Gastrocnemius medialis (tissue), 4 donors: ENCODE measurements at regions of chr9 and their contacts with region 1.

Region 1: DNA sequence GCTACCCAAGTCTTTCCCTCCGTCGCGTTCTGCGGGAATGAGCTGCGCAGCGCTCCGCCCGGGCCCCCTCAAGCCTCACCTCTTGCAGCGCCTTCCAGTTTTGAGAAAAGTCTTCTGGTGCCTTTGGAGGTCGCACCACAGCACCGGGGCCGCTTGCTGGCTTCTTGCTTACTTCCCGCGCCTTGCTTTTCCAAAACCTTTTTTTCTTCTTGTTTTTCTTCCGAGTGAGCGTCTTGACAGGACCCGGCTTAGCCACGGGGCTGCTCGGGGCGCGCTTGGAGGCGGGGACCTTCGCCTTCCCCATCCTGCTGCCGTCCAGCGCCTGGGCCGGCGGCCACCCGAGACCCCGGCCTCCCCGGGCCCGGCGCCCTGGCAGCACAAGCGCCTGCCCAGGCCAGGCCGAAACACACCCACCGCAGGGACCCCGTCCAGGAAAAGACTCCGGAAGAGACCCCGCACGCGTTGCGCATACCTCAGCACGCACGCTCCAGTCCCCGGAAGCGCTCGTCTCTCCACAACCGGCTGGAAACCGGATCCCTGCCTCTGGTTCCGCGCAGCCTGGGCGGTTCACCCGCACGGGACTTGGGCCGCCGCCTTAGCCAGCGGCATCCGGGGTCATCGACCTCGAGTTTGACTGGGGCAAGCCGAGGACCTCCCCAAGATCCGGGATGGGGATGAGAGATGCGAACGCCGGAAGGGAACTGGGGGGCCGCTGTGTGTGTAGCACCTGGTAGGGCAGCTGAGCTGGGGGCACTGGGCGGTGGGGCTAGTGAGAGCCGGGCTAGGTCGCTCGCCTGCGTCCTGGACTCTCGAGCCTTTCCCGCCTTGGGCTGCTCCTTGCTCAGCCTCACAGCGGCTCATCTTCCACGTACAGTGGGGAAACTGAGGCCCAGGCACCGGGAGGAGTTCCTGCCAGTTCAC is at the start of gene REXO4:
- DNase-seq: peak; percentile 58 to 74
- ATAC-seq: peak; percentile 94 to 95
- H3K4me3 ChIP-seq: peak within 1 kb of the TSS; percentile 79 to 82 (median 82)
- H3K27ac ChIP-seq: peak within 1 kb of the TSS; percentile 74 to 86 (median 84)
- H3K4me1 ChIP-seq: peaks cover 21 to 23% of the 10 kb centered on the region in 2 donors
- H3K27me3 ChIP-seq: no peaks in the 10 kb centered on the region
- CTCF ChIP-seq: peak in 1 of 5 experiments; percentile 7
- POLR2A ChIP-seq: peak; percentile 17 to 45
- total RNA-seq, gene REXO4: 26.1 to 42.5 (median 34.6) TPM

Region 2: DNA sequence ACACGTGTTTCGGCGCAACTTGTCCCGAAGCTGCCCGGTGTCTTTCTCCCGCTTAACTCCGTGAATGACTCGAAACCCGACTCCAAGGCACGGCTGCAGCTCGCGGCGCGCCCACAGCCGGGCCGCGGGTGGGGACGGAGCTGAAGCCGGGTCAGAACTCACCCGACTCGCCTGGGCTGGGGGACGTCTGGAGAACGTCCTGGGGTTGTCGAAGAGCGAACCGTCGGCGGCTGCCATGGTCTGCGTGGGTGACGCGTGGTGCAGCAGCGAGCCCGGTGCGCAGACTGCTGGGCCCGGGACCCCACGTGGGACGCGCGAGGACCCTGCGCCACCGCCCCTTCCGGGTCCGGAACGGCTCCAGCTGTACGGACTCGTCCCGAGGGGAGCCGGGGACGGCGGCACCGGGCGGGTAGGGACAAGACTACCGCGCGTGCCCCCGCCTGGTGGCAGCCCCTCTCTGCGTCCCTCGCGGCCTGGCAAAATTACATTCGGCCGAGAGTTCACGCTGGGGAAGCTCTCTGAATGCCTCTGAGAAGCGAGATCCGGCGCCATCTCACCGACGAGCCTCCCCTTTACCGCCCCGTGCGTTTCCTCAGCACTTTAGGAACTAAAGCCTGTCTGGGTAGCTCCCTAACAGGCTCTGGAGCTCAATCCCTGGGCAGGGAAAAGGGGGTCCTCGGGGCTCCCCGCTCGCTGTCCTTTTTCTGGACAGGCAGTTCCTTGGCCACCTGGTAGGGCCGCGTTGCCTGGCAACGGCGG is 747.9 kb before region 1 on chr9 and contains the start of gene DDX31:
- in situ Hi-C with region 1: no loop called
- intact Hi-C with region 1: loop called (anchors 5 kb)
- DNase-seq: peak; percentile 70 to 78
- ATAC-seq: peak; percentile 89 to 94
- H3K4me3 ChIP-seq: peak within 1 kb of the TSS; percentile 89 to 99 (median 97)
- H3K27ac ChIP-seq: peak within 1 kb of the TSS; percentile 93 to 98 (median 96)
- H3K4me1 ChIP-seq: peaks cover 18 to 35% of the 10 kb centered on the region in 2 donors
- H3K27me3 ChIP-seq: no peaks in the 10 kb centered on the region
- CTCF ChIP-seq: no peak
- POLR2A ChIP-seq: peak; percentile 74 to 77
- total RNA-seq, gene DDX31: 5.4 to 8.8 (median 6.4) TPM

Region 3: GRCh38 chr9:133075925-133076630 is 341.7 kb before region 1 on chr9:
- in situ Hi-C with region 1: no loop called
- intact Hi-C with region 1: no loop called
- DNase-seq: no peak
- ATAC-seq: no peak
- H3K4me3 ChIP-seq: no peak overlapping the region
- H3K27ac ChIP-seq: no peak overlapping the region
- H3K4me1 ChIP-seq: no peaks in the 10 kb centered on the region
- H3K27me3 ChIP-seq: no peaks in the 10 kb centered on the region
- CTCF ChIP-seq: no peak
- POLR2A ChIP-seq: no peak

Region 4: DNA sequence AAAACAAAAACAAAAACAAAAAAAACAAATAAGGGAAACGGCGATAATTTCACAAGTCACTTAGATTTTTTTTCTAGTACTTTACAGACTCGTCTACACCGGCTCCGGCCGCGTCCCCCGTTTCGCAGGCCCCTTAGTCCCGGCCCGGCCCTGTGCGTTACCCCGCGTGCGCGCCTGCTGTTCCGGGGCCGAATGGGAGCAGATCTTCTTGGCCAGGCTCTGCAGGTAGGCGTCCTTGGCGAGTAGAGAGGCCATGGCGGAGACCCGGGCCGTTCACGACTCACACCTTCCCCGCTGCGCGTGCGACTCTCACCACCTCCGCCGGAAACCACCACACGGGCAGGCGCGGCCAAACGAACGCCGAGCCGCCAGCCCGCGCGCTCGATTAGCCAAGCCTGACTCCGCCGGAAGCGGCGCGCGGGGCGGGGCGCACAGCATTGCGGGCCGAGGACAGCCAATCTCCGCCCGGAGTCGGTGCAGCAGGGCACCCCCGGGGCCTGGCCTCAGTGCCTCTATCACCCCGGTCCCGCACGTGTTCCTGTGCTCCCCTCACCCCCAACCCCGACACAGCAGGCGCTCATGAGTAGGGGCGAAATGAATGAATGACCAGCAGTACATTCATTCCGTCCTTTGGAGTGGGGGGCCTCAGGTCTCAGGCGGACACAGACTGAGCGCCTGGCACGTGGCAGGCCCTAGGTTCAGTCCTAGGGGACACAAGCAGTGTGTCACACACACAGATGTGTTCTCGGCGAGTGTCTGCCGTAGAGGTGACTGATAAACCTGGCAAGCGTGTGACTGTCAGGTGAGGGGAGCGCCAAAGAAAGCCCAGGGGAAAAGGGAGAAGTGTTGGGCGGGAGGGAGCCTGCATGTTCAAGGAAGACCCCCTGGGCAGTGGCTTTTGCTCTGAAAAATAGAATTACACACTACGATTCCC is 81.7 kb before region 1 on chr9 and contains the start of gene SURF6:
- in situ Hi-C with region 1: no loop called
- intact Hi-C with region 1: loop called (anchors 1 kb)
- DNase-seq: peak; percentile 85 to 88
- ATAC-seq: peak; percentile 92 to 95
- H3K4me3 ChIP-seq: peak within 1 kb of the TSS; percentile 75 to 96 (median 90)
- H3K27ac ChIP-seq: peak within 1 kb of the TSS; percentile 80 to 90 (median 87)
- H3K4me1 ChIP-seq: peaks cover 22 to 30% of the 10 kb centered on the region in 2 donors
- H3K27me3 ChIP-seq: no peaks in the 10 kb centered on the region
- CTCF ChIP-seq: peak in 1 of 5 experiments; percentile 13
- POLR2A ChIP-seq: peak; percentile 65 to 70
- total RNA-seq, gene SURF6: 13.4 to 34.2 (median 28.0) TPM

Region 5: DNA sequence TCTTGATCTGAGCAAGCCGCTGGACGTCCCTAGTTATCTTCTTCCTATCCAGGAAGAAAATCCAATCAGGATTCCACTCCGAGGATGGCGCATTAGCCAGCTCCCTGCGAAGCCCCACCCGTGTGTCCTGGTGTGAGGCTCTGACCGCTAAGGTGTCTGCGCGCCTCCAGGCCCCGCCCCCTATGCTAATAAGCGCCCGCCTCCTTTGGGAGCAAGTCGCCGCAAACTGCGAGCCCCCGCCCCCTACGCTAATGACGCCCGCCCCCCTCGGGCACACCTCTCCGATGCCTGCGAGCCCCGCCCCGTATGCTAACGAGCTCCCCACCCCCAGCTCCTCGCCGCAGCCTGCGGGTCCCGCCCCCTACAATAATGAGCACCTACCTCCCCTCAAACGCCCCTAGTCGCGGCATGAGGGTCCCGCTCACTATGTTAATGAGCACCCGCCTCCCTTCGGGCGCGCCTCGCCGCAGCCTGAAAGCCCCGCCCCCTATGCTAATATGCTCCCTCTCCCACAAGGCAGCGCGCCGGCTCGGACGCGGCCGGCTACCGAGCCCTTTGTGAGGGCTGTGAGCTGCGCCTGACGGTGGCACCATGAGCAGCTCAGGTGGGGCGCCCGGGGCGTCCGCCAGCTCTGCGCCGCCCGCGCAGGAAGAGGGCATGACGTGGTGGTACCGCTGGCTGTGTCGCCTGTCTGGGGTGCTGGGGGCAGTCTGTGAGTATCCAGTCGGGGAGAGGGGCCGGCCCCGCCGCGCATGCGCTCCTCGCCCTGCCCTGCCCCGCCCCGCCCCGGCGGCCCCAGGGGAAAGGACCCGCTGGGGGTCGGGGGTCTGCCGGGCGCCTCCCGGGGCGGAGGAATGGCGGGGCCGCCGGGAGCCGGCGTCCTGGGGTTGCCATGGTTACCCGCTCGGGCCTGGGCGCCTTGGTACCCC is 41.9 kb after region 1 on chr9 and contains the start of gene CACFD1:
- in situ Hi-C with region 1: no loop called
- intact Hi-C with region 1: loop called (anchors 2 kb)
- DNase-seq: peak; percentile 96
- ATAC-seq: peak; percentile 91 to 94
- H3K4me3 ChIP-seq: peak within 1 kb of the TSS; percentile 75 to 97 (median 79)
- H3K27ac ChIP-seq: peak within 1 kb of the TSS; percentile 91 to 99 (median 92)
- H3K4me1 ChIP-seq: peaks cover 7 to 19% of the 10 kb centered on the region in 2 donors
- H3K27me3 ChIP-seq: no peaks in the 10 kb centered on the region
- CTCF ChIP-seq: no peak
- POLR2A ChIP-seq: peak; percentile 45 to 72
- total RNA-seq, gene CACFD1: 7.0 to 28.3 (median 10.1) TPM

Region 6: GRCh38 chr9:133485361-133486260 is 67.8 kb after region 1 on chr9:
- in situ Hi-C with region 1: loop called in 3 of 4 experiments (anchors 5 to 10 kb)
- intact Hi-C with region 1: no loop called
- DNase-seq: no peak
- ATAC-seq: no peak
- H3K4me3 ChIP-seq: no peak overlapping the region
- H3K27ac ChIP-seq: no peak overlapping the region
- H3K4me1 ChIP-seq: no peaks in the 10 kb centered on the region
- H3K27me3 ChIP-seq: no peaks in the 10 kb centered on the region
- CTCF ChIP-seq: no peak
- POLR2A ChIP-seq: no peak